Activated T-helper 1 cell treated with anti-CD3 and anti-CD28 coated beads, Interleukin-12 subunit alpha, Interleukin-12 subunit beta, Interleukin-2, Interleukin-4 antibody, amounts not matched to agents 30 ng/mL and 10 ng/mL and 1 ng/mL, durations not matched to agents 14 hours and 24 hours and 36 hours (primary cell): ENCODE measurements at regions of chr2 and their contacts with region 1.

Region 1: GRCh38 chr2:210002158-210003157 is at the start of gene RPE:
- DNase-seq: peak; percentile 95
- H3K4me3 Mint-ChIP-seq: peak within 1 kb of the TSS; percentile 96
- H3K27ac Mint-ChIP-seq: peak within 1 kb of the TSS; percentile 93
- H3K4me1 Mint-ChIP-seq: peaks cover 60% of the 10 kb centered on the region
- H3K27me3 Mint-ChIP-seq: no peaks in the 10 kb centered on the region
- total RNA-seq, gene RPE: 56.8 and 58.7 TPM in 2 replicates

Region 2: DNA sequence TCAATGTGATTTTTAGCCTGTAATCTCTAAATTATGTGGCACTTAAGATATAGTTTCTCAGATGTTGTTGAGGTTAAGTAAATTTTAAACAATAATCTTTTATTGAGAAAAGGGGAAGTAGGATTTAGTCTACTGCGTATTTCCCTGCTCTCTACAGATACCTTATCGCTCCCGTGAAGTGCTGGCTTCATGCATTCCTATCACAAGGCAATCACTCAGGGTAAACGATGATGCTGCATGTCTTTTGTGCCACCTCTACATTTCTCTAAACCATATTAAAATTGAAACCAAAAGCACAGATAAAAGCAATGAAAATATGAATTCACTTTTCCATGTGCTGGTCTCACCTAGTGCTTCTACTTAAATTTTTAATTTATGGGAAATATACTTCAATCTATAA is 14.4 kb before region 1 on chr2:
- intact Hi-C with region 1: no loop called
- DNase-seq: no peak
- H3K4me3 Mint-ChIP-seq: no peak overlapping the region
- H3K27ac Mint-ChIP-seq: no peak overlapping the region
- H3K4me1 Mint-ChIP-seq: no peaks in the 10 kb centered on the region
- H3K27me3 Mint-ChIP-seq: peaks cover 22% of the 10 kb centered on the region

Region 3: GRCh38 chr2:210020138-210020537 is 17.7 kb after region 1 on chr2:
- intact Hi-C with region 1: loop called (anchors 2 kb)
- DNase-seq: no peak
- H3K4me3 Mint-ChIP-seq: no peak overlapping the region
- H3K27ac Mint-ChIP-seq: no peak overlapping the region
- H3K4me1 Mint-ChIP-seq: no peaks in the 10 kb centered on the region
- H3K27me3 Mint-ChIP-seq: no peaks in the 10 kb centered on the region

Region 4: GRCh38 chr2:210171309-210172203 is 169.1 kb after region 1 on chr2 and contains the start of gene KANSL1L:
- intact Hi-C with region 1: loop called (anchors 1 kb)
- DNase-seq: peak; percentile 95
- H3K4me3 Mint-ChIP-seq: peak within 1 kb of the TSS; percentile 98
- H3K27ac Mint-ChIP-seq: peak within 1 kb of the TSS; percentile 96
- H3K4me1 Mint-ChIP-seq: peaks cover 30% of the 10 kb centered on the region
- H3K27me3 Mint-ChIP-seq: peaks cover 31% of the 10 kb centered on the region
- total RNA-seq, gene KANSL1L: 3.0 and 3.6 TPM in 2 replicates

Region 5: DNA sequence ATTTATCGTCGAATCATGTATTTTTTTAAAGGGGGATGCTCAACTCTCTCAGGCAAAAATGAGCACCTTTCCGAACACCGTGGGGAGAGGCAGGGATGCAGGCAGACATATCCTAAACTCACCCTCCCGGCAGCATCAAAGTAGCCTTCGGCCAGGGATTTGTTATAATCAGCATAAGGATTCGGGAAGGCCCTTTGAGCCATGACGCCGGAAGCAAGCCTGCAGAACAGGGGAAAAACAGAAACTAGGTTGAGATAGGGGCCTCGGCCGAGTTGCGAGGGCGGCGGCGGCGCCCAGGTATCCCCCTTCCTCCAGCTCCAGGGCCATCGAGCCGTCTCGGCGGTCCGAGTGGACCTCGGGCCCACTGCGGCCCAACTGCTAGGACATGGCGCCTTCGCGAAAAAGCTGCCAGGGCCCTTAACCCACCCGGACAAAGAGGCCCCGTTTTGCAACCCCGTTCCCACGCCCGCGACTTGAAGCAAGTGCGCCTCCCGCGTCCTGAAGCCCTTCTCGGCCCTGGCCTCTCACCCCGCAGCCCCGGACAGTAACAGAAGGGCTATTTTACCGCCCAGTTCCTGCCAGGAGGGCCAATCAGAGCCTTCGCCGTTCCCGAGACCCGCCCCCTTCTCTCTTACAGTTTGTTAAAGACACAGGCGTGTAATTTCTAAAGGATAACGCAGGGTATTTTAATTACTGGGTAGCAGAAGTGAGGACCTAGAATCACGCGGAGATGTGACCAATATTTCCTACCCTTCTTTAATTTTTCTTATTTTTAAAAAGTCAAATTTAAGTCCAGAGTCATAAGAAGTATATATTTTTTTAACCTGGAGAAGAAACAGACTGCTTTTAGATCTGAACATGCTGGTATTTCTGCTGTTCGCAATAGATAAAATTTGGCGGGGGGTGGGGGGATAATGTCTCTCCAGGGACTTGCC is 474.0 kb after region 1 on chr2 and contains the start of gene LANCL1:
- intact Hi-C with region 1: loop called (anchors 1 kb)
- DNase-seq: peak; percentile 76
- H3K4me3 Mint-ChIP-seq: peak within 1 kb of the TSS; percentile 99
- H3K27ac Mint-ChIP-seq: peak within 1 kb of the TSS; percentile 98
- H3K4me1 Mint-ChIP-seq: peaks cover 46% of the 10 kb centered on the region
- H3K27me3 Mint-ChIP-seq: no peaks in the 10 kb centered on the region
- total RNA-seq, gene LANCL1: 27.3 and 33.6 TPM in 2 replicates